Naive thymus-derived CD4-positive, alpha-beta T cell (primary cell): ENCODE measurements at regions of chr2 and their contacts with region 1.

Region 1: DNA sequence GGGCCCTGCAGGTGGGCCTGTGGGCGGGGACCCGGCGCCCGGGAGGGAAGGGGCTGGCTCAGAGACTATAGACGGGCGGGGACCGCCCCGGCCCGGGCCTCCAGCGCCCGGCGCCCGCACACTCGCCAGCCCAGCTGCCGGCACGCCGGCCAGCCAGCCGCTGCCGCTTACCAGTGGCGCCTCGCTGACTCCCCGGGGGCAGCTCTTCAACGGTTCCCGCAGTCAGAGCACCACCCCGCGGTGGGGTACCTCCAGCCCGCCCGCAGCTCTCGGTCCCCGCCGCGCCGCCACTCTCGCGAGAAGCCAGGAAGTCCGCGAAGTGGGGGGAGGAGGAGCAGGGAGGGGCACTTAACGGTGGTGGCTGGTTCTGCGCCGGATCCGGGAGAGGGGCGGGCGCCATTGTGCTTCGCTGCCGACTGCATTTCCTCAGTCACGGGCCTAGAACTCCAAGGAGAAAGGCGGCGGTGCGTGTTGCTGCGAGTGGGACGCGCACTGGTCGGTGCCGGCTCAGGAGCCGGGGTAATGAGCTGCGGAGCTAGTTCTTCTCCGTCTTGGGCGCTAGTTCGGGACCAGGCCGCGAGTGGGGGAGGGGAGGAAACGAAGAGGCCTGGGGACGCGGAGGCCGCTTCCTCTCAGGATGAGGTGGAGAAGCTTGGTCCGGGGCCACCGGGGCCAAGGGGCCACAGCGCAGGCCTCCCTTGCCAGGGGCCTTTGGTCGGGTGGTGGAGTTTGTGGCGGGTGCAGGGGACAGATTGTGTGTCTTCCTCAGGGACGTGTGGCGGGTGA is at the start of gene MARCHF7:
- DNase-seq: peak; percentile 95 to 99 (median 98)
- ATAC-seq: peak; percentile 96
- H3K4me3 ChIP-seq: peak within 1 kb of the TSS; percentile 98
- H3K4me3 Mint-ChIP-seq: peak within 1 kb of the TSS; percentile 95 to 100 (median 100)
- H3K27ac ChIP-seq: peak within 1 kb of the TSS; percentile 90
- H3K27ac Mint-ChIP-seq: peak within 1 kb of the TSS; percentile 97 to 100 (median 99)
- H3K4me1 ChIP-seq: peaks cover 43 to 44% of the 10 kb centered on the region in 2 donors
- H3K4me1 Mint-ChIP-seq: peaks cover 36 to 63% (median 50%) of the 10 kb centered on the region in 7 donors
- H3K27me3 ChIP-seq: no peaks in the 10 kb centered on the region
- H3K27me3 Mint-ChIP-seq: no peaks in the 10 kb centered on the region
- total RNA-seq, gene MARCHF7: 64.3 to 120 (median 80.2) TPM

Region 2: GRCh38 chr2:159124441-159124911 is 587.9 kb before region 1 on chr2:
- CTCF ChIA-PET with region 1: no interaction called
- POLR2A ChIA-PET with region 1: no interaction called
- intact Hi-C with region 1: loop called in 1 of 2 experiments (anchors 10 kb)
- DNase-seq: peak in 1 of 9 donors; percentile 11
- ATAC-seq: peak; percentile 68
- H3K4me3 ChIP-seq: no peak overlapping the region
- H3K4me3 Mint-ChIP-seq: peak overlapping the region in 8 of 10 donors; percentile 3 to 63 (median 36)
- H3K27ac ChIP-seq: no peak overlapping the region
- H3K27ac Mint-ChIP-seq: peak overlapping the region; percentile 43 to 93 (median 79)
- H3K4me1 ChIP-seq: peaks cover 0 to 14% of the 10 kb centered on the region in 2 donors
- H3K4me1 Mint-ChIP-seq: peaks cover 8 to 35% (median 28%) of the 10 kb centered on the region in 7 donors
- H3K27me3 ChIP-seq: no peaks in the 10 kb centered on the region
- H3K27me3 Mint-ChIP-seq: no peaks in the 10 kb centered on the region

Region 3: GRCh38 chr2:159516241-159516766 is 196.0 kb before region 1 on chr2:
- CTCF ChIA-PET with region 1: no interaction called
- POLR2A ChIA-PET with region 1: interaction called, 10 read pairs
- intact Hi-C with region 1: loop called (anchors 1 to 2 kb)
- DNase-seq: peak in 7 of 9 donors; percentile 46 to 74 (median 55)
- ATAC-seq: peak; percentile 97
- H3K4me3 ChIP-seq: peak overlapping the region; percentile 71
- H3K4me3 Mint-ChIP-seq: peak overlapping the region; percentile 77 to 94 (median 86)
- H3K27ac ChIP-seq: peak overlapping the region; percentile 71
- H3K27ac Mint-ChIP-seq: peak overlapping the region; percentile 58 to 96 (median 93)
- H3K4me1 ChIP-seq: peaks cover 11 to 27% of the 10 kb centered on the region in 2 donors
- H3K4me1 Mint-ChIP-seq: peaks cover 9 to 40% (median 28%) of the 10 kb centered on the region in 7 donors
- H3K27me3 ChIP-seq: no peaks in the 10 kb centered on the region
- H3K27me3 Mint-ChIP-seq: no peaks in the 10 kb centered on the region

Region 4: DNA sequence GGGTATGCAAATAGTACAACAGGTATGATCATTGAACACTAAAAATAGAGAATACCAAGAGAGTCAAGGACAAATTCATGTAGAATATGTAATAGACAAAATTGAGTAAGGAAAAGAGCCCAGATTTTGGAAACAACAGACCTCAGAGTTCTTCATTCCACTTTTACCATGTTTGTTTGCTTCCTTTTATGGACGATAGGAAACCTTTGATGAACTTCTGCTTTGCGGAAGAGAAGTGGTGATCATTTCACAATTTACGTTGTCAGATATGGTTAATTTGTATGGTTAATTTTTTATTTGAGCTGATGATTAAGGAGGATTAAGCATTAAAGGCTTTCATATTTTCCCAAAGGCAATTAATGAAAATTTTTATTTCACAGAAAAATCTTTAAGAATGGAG is 16.3 kb after region 1 on chr2:
- CTCF ChIA-PET with region 1: no interaction called
- POLR2A ChIA-PET with region 1: interaction called, 5 read pairs
- intact Hi-C with region 1: loop called in 1 of 2 experiments (anchors 1 kb)
- DNase-seq: no peak
- ATAC-seq: no peak
- H3K4me3 ChIP-seq: no peak overlapping the region
- H3K4me3 Mint-ChIP-seq: peak overlapping the region in 4 of 10 donors; percentile 0 to 35 (median 6)
- H3K27ac ChIP-seq: no peak overlapping the region
- H3K27ac Mint-ChIP-seq: peak overlapping the region in 4 of 9 donors; percentile 2 to 69 (median 10)
- H3K4me1 ChIP-seq: no peaks in the 10 kb centered on the region
- H3K4me1 Mint-ChIP-seq: peaks cover 31 to 72% (median 57%) of the 10 kb centered on the region in 7 donors
- H3K27me3 ChIP-seq: no peaks in the 10 kb centered on the region
- H3K27me3 Mint-ChIP-seq: no peaks in the 10 kb centered on the region

Region 5: DNA sequence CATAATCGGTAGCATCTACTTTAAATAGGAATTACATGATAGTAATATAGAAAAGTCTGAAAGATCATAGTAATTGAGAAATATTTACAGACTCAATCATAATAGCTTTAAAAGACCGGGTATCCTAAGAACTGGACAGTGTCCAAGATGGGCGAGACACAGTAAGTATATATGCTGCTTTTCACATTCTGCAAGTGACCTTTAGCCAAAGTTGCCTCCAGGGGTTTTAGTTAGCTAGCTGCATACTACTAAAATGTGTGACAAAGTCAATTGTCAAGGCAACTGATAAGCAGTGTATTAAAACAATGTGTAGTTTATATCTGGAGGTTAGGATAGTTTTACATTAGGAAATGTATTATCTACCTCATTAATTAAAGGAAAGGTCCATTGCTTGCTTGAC is 61.1 kb after region 1 on chr2:
- CTCF ChIA-PET with region 1: no interaction called
- POLR2A ChIA-PET with region 1: no interaction called
- intact Hi-C with region 1: loop called in 1 of 2 experiments (anchors 10 kb)
- DNase-seq: no peak
- ATAC-seq: no peak
- H3K4me3 ChIP-seq: no peak overlapping the region
- H3K4me3 Mint-ChIP-seq: no peak overlapping the region
- H3K27ac ChIP-seq: no peak overlapping the region
- H3K27ac Mint-ChIP-seq: peak overlapping the region in 2 of 9 donors; percentile 33 to 62
- H3K4me1 ChIP-seq: no peaks in the 10 kb centered on the region
- H3K4me1 Mint-ChIP-seq: peaks cover 0 to 6% (median 3%) of the 10 kb centered on the region in 7 donors
- H3K27me3 ChIP-seq: no peaks in the 10 kb centered on the region
- H3K27me3 Mint-ChIP-seq: no peaks in the 10 kb centered on the region

Region 6: DNA sequence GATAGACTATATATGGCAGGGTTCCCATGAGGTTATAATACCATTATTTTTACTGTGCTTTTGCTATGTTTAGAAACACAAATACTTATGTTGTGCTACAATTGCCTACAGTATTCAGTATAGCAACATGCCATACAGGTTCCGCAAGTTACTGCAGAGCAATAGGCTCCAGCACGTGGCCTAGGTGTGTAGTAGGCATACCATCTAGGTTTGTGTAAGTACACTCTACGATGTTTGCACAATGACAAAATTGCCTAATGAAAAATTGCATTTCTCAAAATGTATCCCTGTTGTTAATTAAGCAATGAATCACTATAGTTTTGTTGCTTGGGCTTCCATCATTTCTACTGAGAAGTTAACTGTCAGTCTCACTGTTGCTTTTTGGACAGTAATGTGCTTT is 75.9 kb after region 1 on chr2:
- CTCF ChIA-PET with region 1: no interaction called
- POLR2A ChIA-PET with region 1: no interaction called
- intact Hi-C with region 1: no loop called
- DNase-seq: no peak
- ATAC-seq: no peak
- H3K4me3 ChIP-seq: no peak overlapping the region
- H3K4me3 Mint-ChIP-seq: no peak overlapping the region
- H3K27ac ChIP-seq: no peak overlapping the region
- H3K27ac Mint-ChIP-seq: peak overlapping the region in 1 of 9 donors; percentile 49
- H3K4me1 ChIP-seq: no peaks in the 10 kb centered on the region
- H3K4me1 Mint-ChIP-seq: peaks cover 0 to 13% (median 6%) of the 10 kb centered on the region in 7 donors
- H3K27me3 ChIP-seq: no peaks in the 10 kb centered on the region
- H3K27me3 Mint-ChIP-seq: no peaks in the 10 kb centered on the region

Region 7: DNA sequence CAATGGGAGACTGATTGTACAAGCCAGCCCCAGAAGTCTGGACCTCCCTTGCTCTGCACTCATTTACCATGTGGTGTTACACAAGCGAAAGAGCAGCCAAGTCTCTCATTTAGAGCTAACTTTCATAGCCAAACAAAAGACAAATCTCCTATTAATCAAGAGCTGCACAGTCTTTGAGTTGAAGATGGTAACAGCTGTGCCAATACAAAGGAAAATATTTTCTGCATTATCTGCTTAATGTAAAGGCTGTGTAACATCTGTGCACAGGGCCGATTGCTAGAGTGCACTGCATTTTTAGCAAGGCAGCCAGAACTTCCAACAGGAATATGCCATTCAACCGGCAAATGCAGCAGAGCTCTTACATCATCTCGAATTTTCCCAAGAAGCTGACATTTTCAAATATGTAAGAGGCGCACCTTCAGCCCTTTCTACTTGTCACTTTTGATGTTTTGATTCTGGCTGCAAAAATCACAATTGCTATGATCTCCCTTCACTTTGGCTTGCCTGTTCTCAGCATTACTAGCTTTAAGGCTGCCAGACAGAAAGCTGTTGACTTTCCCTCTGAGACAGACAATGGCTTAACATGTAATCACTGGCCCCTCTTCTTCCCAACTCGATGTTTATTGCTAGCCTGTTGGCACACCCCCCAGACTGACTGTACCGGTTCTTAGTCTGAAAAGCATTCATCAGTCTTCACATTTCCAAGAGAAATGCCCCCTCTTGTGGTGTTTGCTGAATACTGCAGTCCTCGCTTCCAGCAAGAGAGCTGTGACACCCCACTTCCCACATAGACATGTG is 1351.0 kb after region 1 on chr2:
- CTCF ChIA-PET with region 1: no interaction called
- POLR2A ChIA-PET with region 1: no interaction called
- intact Hi-C with region 1: loop called in 1 of 2 experiments (anchors 5 kb)
- DNase-seq: peak; percentile 17 to 70 (median 62)
- ATAC-seq: peak; percentile 94
- H3K4me3 ChIP-seq: no peak overlapping the region
- H3K4me3 Mint-ChIP-seq: no peak overlapping the region
- H3K27ac ChIP-seq: no peak overlapping the region
- H3K27ac Mint-ChIP-seq: peak overlapping the region in 3 of 9 donors; percentile 18 to 65 (median 53)
- H3K4me1 ChIP-seq: no peaks in the 10 kb centered on the region
- H3K4me1 Mint-ChIP-seq: peaks cover 2 to 12% (median 5%) of the 10 kb centered on the region in 7 donors
- H3K27me3 ChIP-seq: no peaks in the 10 kb centered on the region
- H3K27me3 Mint-ChIP-seq: peaks cover 0 to 5% (median 0%) of the 10 kb centered on the region in 5 donors